Activated naive CD4-positive, alpha-beta T cell treated with anti-CD3 and anti-CD28 coated beads for 36 hours (primary cell): ENCODE measurements at regions of chr16 and their contacts with region 1.

Region 1: DNA sequence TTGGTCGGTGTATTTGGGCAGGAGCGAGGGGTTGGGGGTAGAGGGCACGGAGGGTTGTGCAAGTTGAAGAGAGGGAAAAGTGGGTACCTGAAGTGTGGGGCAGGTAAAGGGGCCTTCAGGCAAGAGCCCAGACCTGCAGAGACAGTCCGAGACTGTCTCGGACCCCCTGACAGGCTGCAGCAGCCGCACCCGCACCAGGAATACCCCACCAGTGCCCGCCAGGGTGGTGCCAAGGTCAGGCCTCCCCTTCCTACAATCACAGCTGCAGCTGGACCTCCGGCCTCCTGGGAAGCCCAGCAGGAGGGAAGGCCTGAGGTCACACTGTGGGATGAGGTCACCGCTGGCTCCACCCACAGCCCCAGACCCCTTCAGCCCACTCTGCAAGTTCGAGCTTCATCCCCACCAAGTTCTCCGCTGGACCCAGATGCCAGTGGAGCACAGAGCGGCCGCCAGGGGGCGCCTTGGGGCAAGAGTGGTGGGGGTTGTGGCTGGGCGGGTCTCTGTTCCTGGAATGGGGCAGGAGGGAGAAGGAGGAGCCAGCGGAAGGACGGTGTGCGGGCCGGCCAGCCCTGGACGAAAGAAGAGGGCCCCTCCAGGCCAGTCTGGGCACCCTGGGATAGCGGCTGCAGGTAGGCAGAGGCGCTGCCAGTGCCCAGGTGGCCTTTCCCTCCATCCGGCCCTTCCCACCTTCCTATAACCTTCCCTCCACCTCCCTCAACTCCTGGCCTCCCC is at the start of gene HSD3B7:
- DNase-seq: peak; percentile 87
- H3K4me3 Mint-ChIP-seq: no peak within 1 kb of the TSS
- H3K27ac Mint-ChIP-seq: no peak within 1 kb of the TSS
- H3K4me1 Mint-ChIP-seq: no peaks in the 10 kb centered on the region
- H3K27me3 Mint-ChIP-seq: no peaks in the 10 kb centered on the region
- total RNA-seq, gene HSD3B7: 0.69 to 0.98 TPM

Region 2: DNA sequence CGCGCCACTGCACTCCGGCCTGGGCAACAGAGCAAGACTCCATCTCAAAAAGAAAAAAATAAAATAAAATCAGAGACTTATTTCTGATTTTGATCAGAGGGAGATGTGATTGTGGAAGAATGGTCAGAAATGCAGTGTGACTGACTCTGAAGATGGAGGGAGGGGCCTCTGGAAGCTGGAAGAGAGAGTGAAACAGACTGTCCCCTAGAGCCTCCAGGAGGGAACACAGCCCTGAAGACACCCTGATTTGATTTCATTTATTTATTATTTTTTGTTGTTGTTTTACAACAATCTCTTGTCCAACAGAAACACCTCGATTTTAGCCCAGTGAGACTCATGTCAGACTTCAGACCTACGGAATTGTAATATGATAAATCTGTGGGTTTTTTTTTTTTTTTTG is 117.1 kb before region 1 on chr16:
- CTCF ChIA-PET with region 1: no interaction called
- intact Hi-C with region 1: no loop called
- DNase-seq: no peak
- H3K4me3 Mint-ChIP-seq: no peak overlapping the region
- H3K27ac Mint-ChIP-seq: no peak overlapping the region
- H3K4me1 Mint-ChIP-seq: peaks cover 3% of the 10 kb centered on the region
- H3K27me3 Mint-ChIP-seq: no peaks in the 10 kb centered on the region

Region 3: DNA sequence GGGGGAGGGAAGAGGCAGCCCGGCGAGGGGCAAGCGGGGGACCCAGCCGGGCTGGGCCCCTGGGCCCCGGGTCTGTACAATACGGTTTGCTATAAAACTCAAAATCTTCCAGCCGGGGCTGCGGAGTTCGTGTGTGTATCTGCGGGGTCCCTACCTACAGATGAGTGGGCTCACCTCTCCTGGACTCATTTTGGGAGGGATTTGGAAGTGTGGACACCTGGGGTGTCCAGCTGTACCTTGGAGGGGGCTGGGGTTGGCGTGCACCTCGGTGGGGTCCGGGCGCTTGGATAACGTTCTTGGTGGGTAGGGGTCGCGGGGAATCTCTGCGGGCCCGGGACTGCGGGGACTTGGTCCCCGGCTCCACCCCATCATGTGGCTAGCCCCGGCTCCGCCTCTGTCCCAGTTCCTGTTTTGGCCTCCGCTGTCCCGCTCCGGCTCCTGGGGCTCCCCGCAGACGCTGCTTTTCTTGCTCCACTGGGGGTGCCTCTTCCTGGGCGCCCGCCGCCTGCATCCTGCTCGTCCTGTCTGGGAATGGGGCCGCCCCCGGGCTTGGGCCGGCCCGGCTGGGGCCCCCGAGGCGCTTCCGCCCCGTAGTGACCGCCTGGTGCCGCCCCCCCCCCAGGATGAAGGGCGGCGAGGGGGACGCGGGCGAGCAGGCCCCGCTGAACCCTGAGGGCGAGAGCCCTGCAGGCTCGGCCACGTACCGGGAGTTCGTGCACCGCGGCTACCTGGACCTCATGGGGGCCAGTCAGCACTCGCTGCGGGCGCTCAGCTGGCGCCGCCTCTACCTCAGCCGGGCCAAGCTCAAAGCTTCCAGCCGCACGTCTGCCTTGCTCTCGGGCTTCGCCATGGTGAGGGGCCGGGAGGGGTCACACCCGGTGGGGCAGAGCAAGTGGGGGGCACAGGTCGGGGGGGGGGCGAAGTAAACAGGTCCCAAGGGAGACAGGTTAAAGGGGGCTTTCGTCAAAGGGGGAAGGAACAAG is 35.9 kb before region 1 on chr16 and contains the start of gene ORAI3:
- CTCF ChIA-PET with region 1: no interaction called
- intact Hi-C with region 1: no loop called
- DNase-seq: peak; percentile 64
- H3K4me3 Mint-ChIP-seq: peak within 1 kb of the TSS; percentile 80
- H3K27ac Mint-ChIP-seq: peak within 1 kb of the TSS; percentile 65
- H3K4me1 Mint-ChIP-seq: peaks cover 16% of the 10 kb centered on the region
- H3K27me3 Mint-ChIP-seq: no peaks in the 10 kb centered on the region
- total RNA-seq, gene ORAI3: 4.2 to 4.7 TPM

Region 4: GRCh38 chr16:30997000-30997886 is 12.4 kb after region 1 on chr16:
- CTCF ChIA-PET with region 1: interaction called, 12 read pairs
- intact Hi-C with region 1: no loop called
- DNase-seq: peak; percentile 86
- H3K4me3 Mint-ChIP-seq: peak overlapping the region; percentile 73
- H3K27ac Mint-ChIP-seq: no peak overlapping the region
- H3K4me1 Mint-ChIP-seq: peaks cover 11% of the 10 kb centered on the region
- H3K27me3 Mint-ChIP-seq: no peaks in the 10 kb centered on the region